ENCODE measurements at regions of chr6 and their contacts with region 1.

Region 1: DNA sequence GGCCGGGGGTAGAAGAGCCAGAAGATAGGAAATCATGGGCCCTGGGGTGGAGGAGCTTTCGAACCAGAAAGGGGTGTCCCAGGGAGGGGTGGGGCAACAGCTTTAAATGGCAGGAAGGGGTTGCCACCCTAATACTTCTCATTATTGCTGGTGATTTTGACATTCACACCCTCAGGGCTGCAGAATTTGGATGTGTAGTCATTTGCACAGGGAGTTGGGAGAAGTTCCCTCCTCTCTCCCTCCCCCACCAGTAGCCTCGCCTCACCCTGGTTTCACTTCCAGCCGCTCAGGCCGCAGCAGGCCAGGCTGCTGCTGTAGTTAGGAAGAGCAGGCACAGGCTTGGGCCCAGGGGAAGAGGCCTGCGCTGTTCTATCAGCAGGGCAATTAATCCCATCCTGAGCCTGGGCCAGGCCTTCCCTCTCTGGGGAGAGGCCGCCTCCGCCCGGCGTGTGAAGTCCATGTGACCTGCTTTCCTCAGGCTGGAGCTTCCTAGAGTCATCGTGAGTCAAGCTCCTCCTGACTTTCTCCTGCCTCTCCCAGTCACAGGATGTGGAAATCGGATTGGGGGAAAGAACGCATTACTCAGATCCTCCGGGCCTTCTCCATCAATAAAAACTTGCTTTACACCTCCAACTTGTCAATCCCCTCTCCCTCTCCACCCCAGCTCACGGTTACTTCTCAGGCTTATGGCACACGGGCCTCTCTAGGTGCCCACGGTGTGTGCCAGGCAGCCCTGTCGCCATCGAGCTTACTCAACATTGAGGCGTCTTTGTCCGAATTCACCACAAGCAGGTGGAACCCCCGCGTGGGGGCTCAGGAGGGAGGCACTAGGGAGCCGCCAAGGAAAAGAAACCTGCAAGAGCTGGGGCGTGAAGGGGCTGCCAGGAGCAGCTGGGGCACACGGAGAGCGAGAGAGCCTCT is 7.8 kb downstream of the ADTRP start:
- DNase-seq: peak; percentile 96 to 99
- H3K4me3 ChIP-seq: peak overlapping the region in 1 of 2 donors; percentile 13
- H3K27ac ChIP-seq: peak overlapping the region; percentile 84 to 94
- H3K4me1 ChIP-seq: peaks cover 5 to 55% (median 43%) of the 10 kb centered on the region in 4 donors
- H3K27me3 ChIP-seq: no peaks in the 10 kb centered on the region
- CTCF ChIP-seq: no peak

Region 2: DNA sequence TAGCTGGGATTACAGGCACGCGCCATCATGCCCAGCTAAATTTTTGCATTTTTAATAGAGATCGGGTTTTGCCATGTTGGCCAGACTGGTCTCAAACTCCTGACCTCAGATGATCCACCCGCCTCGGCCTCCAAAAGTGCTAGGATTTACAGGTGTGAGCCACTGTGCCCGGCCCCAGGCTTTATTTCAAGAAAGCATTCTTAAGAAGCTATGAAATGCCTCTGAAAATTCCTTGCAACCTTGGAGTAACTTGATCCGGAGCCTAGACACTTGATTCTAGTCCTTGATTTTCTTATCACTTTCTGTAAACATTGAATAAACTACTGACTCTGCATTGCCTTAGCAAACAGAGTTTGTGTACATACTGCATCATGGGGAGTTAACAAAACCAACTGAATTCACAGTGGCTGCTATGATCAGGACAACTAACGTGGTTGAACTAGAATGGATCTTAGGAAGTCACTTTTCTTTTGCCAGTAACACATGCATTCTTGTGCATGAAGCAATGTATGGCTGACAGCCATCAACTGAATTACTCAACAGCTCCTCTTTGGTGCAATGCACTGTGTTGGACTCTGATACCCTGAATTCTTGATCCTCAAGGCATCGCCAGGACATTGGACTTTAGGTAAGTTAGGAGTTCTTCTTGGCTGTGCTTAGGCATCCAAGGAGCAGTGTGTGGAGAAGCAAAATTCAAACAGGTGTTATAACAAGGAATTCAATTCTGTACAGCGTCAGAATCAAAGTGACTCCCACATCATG is 336.1 kb before region 1 on chr6:
- intact Hi-C with region 1: no loop called
- DNase-seq: peak in 1 of 2 donors; percentile 74
- H3K4me3 ChIP-seq: no peak overlapping the region
- H3K27ac ChIP-seq: peak overlapping the region; percentile 77 to 82
- H3K4me1 ChIP-seq: peaks cover 0 to 71% (median 31%) of the 10 kb centered on the region in 4 donors
- H3K27me3 ChIP-seq: no peaks in the 10 kb centered on the region
- CTCF ChIP-seq: no peak

Region 3: GRCh38 chr6:11732036-11732631 is 38.7 kb before region 1 on chr6:
- intact Hi-C with region 1: loop called (anchors 5 kb)
- DNase-seq: peak; percentile 93 to 95
- H3K4me3 ChIP-seq: peak overlapping the region in 1 of 2 donors; percentile 1
- H3K27ac ChIP-seq: peak overlapping the region; percentile 76 to 77
- H3K4me1 ChIP-seq: peaks cover 0 to 23% (median 21%) of the 10 kb centered on the region in 4 donors
- H3K27me3 ChIP-seq: no peaks in the 10 kb centered on the region
- CTCF ChIP-seq: no peak

Region 4: DNA sequence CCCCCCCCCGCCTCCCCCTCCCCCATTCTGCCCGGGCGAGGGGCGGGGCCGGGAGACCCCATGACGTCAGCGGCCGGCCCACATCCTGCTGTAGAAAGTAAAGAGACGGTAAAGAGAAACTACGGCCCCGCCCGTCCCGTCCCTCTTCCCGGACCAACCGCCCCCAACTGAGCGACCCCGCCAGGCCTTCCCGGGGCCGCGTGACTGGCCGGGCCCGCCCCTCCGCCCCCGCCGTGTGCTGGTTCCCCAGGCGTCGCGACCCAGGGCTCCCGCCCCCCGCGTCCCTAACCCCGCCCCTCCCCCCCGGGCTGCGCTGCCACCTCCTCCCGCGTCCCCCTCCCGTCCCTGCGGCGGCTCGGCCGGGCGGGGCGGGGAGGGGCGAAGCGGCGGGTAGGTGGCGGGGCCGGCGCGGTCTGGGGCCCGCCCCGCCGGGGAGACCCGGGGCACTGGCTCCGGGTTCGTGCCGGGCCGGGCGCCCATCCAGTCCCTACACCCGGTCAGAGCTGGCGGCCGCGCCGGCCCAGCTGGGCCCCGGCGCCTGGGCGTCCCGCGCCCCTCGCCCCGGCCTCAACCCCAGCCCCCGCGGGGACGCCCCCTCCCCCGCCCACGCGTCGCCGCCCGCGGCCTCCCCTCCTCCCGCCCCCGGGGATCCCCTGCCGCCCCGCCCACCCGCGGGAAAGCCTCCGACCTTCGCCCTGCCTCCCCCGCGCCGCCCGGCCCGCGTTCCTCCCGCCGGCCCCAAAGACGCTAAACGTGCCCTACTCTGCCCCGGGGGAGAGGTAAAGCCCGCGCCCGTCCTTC is 240.7 kb after region 1 on chr6:
- intact Hi-C with region 1: loop called (anchors 5 kb)
- DNase-seq: peak; percentile 97 to 99
- H3K4me3 ChIP-seq: peak overlapping the region; percentile 88 to 91
- H3K27ac ChIP-seq: peak overlapping the region; percentile 92 to 94
- H3K4me1 ChIP-seq: peaks cover 0 to 29% (median 14%) of the 10 kb centered on the region in 4 donors
- H3K27me3 ChIP-seq: no peaks in the 10 kb centered on the region
- CTCF ChIP-seq: no peak